ENCODE measurements at regions of chr13 and their contacts with region 1.

Region 1: DNA sequence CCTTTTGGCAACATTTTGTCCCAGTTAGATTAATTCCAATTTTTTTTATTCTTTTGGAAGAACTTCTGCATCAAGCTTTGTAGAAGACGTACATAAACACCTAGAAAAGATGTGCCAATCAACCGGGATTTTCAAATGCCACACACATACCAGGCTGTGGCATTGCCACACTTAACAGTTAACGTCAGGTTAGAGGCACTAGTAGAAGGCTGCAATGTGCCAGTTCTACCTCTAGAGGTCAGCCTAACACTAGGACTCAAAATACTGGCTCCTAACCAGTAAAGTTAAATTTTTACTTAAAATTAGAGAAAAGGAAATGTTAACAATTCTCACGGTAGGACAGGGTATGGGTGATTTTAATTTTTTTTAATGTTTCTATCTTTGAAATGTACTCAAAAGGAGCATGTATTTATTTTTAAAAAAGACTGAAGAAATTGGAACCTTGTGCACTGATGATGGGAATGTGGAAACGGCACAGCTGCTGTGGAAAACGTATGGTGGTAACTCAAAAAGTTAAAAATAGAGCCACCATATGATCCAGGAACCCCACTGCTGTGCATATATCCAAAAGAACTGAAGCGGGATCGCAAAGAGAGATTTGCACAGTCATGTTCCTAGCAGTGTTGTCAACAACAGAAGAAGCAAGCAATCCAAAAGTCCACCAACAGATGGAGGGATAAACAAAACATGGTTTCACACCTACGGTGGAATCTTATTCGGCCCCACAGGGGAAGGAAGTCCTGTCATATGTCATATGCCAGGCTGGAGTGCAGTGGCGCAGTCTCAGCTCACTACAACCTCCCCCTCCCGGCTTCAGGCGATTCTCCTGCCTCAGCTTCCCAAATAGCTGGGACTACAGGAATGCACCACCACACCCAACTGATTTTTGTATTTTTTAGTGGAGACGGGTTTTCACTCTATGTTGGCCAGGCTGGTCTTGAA is 30.3 kb downstream of the CRYL1 start:
- DNase-seq: peak; percentile 53 to 74

Region 2: DNA sequence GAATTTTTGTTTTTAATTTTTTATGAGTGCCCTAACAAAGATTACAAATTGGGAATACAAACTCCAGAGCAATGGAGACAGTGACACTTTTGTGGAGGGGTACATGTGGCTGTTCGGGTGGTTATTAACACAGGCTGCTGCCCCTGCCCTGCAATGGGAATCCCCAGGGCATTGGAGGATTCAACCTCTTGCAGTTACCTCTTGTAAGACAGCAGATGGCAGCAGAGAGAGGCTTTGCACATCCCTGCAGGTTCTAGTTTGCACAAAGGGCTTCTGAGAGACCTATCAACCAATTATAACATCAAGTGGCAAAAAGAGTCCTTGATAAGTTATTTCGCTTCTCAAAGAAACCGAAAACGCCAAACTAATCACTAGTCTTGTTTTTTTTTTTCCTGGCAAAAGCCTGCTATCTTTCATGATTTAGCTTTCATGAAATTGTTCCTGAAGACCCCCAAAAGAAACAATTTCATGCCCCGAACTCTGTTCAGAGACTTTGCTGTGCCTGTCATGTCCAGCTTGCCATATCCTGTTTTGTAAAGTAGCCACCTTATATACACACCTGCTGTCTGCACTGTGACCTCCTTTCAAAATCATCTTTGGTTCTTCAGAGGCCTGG is 313.0 kb before region 1 on chr13:
- in situ Hi-C with region 1: loop called (anchors 25 kb)
- DNase-seq: peak; percentile 62 to 70

Measured in T47D (cell line).